ENCODE measurements at regions of chr3 and their contacts with region 1.

Region 1: DNA sequence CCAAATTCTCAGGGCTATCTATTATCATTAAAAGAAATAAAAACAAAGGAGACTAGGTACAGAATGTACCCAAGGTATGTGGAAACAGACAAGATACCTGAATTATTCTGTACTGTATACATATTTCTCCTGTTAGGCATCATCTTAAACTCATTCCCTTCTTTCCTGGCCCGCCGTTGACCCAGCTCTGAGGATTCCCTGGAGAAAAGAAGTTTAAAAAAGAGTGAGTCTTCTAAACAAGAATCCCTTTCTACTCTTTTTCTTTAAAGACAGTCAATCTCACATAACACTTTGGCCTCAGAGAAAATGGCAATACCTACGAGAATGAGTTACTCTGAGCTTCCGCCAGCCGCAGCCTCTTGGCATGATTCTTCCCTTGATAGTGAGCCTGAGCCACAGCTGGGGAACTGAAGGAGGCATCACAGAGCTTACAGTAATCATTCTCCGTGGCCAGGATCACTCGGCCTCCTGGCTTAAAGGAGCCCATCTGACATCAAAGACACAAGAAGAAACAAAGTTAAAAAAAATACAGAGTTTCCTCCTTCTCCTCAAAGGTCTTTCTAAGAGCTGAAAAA is 44.2 kb downstream of the ZMAT3 start:
- DNase-seq: no peak
- ATAC-seq: no peak
- H3K4me3 ChIP-seq: no peak overlapping the region
- H3K27ac ChIP-seq: no peak overlapping the region
- H3K4me1 ChIP-seq: no peaks in the 10 kb centered on the region
- H3K27me3 ChIP-seq: no peaks in the 10 kb centered on the region
- CTCF ChIP-seq: no peak

Region 2: GRCh38 chr3:178001670-178002101 is 1025.7 kb before region 1 on chr3:
- intact Hi-C with region 1: no loop called
- DNase-seq: no peak
- ATAC-seq: no peak
- H3K4me3 ChIP-seq: no peak overlapping the region
- H3K27ac ChIP-seq: peak overlapping the region in 1 of 2 donors; percentile 85
- H3K4me1 ChIP-seq: peaks cover 0 to 29% of the 10 kb centered on the region in 2 donors
- H3K27me3 ChIP-seq: no peaks in the 10 kb centered on the region
- CTCF ChIP-seq: no peak

Region 3: DNA sequence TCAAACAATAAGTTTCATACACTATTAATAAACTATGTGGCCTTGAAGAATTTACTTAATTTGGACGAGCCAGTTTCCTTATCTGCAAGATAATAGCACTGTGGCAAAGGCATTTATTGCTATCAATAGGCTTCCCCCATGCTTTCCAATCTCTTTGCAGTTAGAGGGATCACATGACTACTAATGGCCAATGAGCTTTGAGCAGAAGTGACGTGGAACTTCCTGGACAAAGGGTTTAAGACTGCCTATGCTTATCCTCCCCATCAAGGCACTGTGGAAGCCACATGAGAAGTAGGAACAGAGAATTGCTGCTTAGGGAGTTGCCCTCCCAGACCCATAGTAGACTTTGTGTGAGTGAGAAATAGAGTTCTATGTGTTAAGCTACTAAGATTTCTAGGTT is 60.9 kb after region 1 on chr3:
- intact Hi-C with region 1: loop called in 1 of 2 experiments (anchors 10 kb)
- DNase-seq: no peak
- ATAC-seq: no peak
- H3K4me3 ChIP-seq: no peak overlapping the region
- H3K27ac ChIP-seq: no peak overlapping the region
- H3K4me1 ChIP-seq: no peaks in the 10 kb centered on the region
- H3K27me3 ChIP-seq: no peaks in the 10 kb centered on the region
- CTCF ChIP-seq: no peak

Measured in left lung (tissue), 14 donors.